MCF 10A (cell line): ENCODE measurements at regions of chr5 and their contacts with region 1.

Region 1: DNA sequence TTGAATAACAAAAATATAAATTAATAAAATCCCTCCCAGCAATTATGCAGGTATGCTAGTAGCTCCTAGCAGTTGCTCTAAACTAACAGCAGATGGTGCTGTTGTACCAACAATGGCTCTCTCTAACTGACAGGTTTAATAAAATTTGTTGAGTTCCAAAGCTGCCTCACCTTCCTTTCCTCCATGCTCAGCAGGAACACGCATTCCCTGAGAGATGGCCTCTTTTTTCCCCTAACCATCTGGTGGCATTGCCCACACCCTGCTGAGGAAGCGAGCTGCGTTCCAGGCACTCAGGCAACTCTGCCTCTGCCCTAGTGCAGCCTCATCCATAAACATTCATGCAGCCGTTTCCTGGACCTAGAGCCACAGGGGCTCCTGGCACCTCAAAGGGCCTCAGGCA is 106.2 kb downstream of the KLHL3 start:
- DNase-seq: peak; percentile 87
- H3K4me3 Mint-ChIP-seq: no peak overlapping the region
- H3K27ac Mint-ChIP-seq: no peak overlapping the region
- H3K4me1 Mint-ChIP-seq: no peaks in the 10 kb centered on the region
- H3K27me3 Mint-ChIP-seq: no peaks in the 10 kb centered on the region
- CTCF ChIP-seq: peak; percentile 99

Region 2: DNA sequence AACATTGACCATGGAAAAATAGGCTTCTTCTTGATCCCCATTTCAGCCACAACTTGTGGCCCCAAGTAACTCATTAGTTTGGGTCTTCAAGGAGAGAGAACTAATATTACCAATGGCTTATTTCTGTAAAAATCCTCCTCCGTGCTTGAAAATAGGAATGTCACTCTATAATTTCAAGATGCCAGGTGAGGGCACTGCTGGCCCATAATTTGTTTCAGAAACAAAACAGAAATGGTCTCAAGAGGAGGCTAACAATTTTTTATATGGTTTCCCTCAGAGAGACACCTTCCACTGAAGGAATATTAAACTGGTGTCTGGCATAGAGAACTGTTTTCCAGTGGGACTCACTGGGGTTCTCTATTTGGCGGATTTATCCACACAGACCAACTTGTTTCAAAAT is 827.3 kb before region 1 on chr5:
- CTCF ChIA-PET with region 1: interaction called, 4 read pairs
- POLR2A ChIA-PET with region 1: no interaction called
- intact Hi-C with region 1: loop called (anchors 10 kb)
- DNase-seq: peak; percentile 34
- H3K4me3 Mint-ChIP-seq: no peak overlapping the region
- H3K27ac Mint-ChIP-seq: no peak overlapping the region
- H3K4me1 Mint-ChIP-seq: no peaks in the 10 kb centered on the region
- H3K27me3 Mint-ChIP-seq: peaks cover 43% of the 10 kb centered on the region
- CTCF ChIP-seq: peak; percentile 49

Region 3: GRCh38 chr5:137201876-137202275 is 427.8 kb before region 1 on chr5:
- CTCF ChIA-PET with region 1: no interaction called
- POLR2A ChIA-PET with region 1: no interaction called
- intact Hi-C with region 1: no loop called
- DNase-seq: peak; percentile 69
- H3K4me3 Mint-ChIP-seq: no peak overlapping the region
- H3K27ac Mint-ChIP-seq: no peak overlapping the region
- H3K4me1 Mint-ChIP-seq: peaks cover 13% of the 10 kb centered on the region
- H3K27me3 Mint-ChIP-seq: no peaks in the 10 kb centered on the region
- CTCF ChIP-seq: no peak

Region 4: GRCh38 chr5:137641148-137641547 is 11.5 kb after region 1 on chr5:
- CTCF ChIA-PET with region 1: interaction called, 102 read pairs
- POLR2A ChIA-PET with region 1: interaction called, 7 read pairs
- intact Hi-C with region 1: no loop called
- DNase-seq: peak; percentile 49
- H3K4me3 Mint-ChIP-seq: no peak overlapping the region
- H3K27ac Mint-ChIP-seq: no peak overlapping the region
- H3K4me1 Mint-ChIP-seq: no peaks in the 10 kb centered on the region
- H3K27me3 Mint-ChIP-seq: no peaks in the 10 kb centered on the region
- CTCF ChIP-seq: no peak

Region 5: GRCh38 chr5:137728048-137728447 is 98.4 kb after region 1 on chr5:
- CTCF ChIA-PET with region 1: interaction called, 30 read pairs
- POLR2A ChIA-PET with region 1: no interaction called
- intact Hi-C with region 1: no loop called
- DNase-seq: no peak
- H3K4me3 Mint-ChIP-seq: no peak overlapping the region
- H3K27ac Mint-ChIP-seq: no peak overlapping the region
- H3K4me1 Mint-ChIP-seq: peaks cover 4% of the 10 kb centered on the region
- H3K27me3 Mint-ChIP-seq: no peaks in the 10 kb centered on the region
- CTCF ChIP-seq: no peak

Region 6: GRCh38 chr5:137754126-137754960 is 124.7 kb after region 1 on chr5 and contains the start of gene HNRNPA0:
- CTCF ChIA-PET with region 1: interaction called, 690 read pairs
- POLR2A ChIA-PET with region 1: interaction called, 8 read pairs
- intact Hi-C with region 1: no loop called
- DNase-seq: peak; percentile 98
- H3K4me3 Mint-ChIP-seq: peak within 1 kb of the TSS; percentile 87
- H3K27ac Mint-ChIP-seq: peak within 1 kb of the TSS; percentile 99
- H3K4me1 Mint-ChIP-seq: peaks cover 28% of the 10 kb centered on the region
- H3K27me3 Mint-ChIP-seq: no peaks in the 10 kb centered on the region
- CTCF ChIP-seq: no peak
- total RNA-seq, gene HNRNPA0: 30.8 and 31.8 TPM in 2 replicates

Region 7: DNA sequence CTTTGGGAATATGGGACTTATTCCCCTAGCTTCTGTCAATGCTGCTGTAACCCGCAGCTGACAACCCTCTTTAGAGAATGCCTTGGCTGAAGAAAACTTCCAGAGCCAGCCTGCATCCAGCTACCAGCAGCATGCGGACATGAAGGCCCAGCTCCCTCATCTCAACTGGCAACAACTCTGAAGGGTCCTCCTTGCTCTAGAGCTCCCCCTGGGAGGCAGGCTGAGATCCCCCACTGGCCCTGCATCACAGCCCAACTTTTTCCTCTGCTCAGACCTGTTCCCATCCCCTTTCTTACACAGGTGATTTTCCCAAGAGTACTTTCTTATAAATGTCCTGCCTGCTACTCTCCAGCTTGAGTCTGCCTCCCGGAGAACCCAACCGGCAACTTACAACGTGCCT is 435.5 kb after region 1 on chr5:
- CTCF ChIA-PET with region 1: interaction called, 13 read pairs
- POLR2A ChIA-PET with region 1: no interaction called
- intact Hi-C with region 1: loop called (anchors 1 kb)
- DNase-seq: no peak
- H3K4me3 Mint-ChIP-seq: no peak overlapping the region
- H3K27ac Mint-ChIP-seq: no peak overlapping the region
- H3K4me1 Mint-ChIP-seq: peaks cover 7% of the 10 kb centered on the region
- H3K27me3 Mint-ChIP-seq: no peaks in the 10 kb centered on the region
- CTCF ChIP-seq: peak; percentile 18

Region 8: GRCh38 chr5:138210985-138211384 is 581.3 kb after region 1 on chr5:
- CTCF ChIA-PET with region 1: no interaction called
- POLR2A ChIA-PET with region 1: no interaction called
- intact Hi-C with region 1: no loop called
- DNase-seq: no peak
- H3K4me3 Mint-ChIP-seq: peak overlapping the region; percentile 20
- H3K27ac Mint-ChIP-seq: no peak overlapping the region
- H3K4me1 Mint-ChIP-seq: peaks cover 21% of the 10 kb centered on the region
- H3K27me3 Mint-ChIP-seq: no peaks in the 10 kb centered on the region
- CTCF ChIP-seq: no peak